Head of caudate nucleus (tissue), 42 donors: ENCODE measurements at regions of chr1 and their contacts with region 1.

Region 1: GRCh38 chr1:212608209-212608955 is at the start of gene ATF3:
- DNase-seq: peak; percentile 96 to 100 (median 99)

Region 2: DNA sequence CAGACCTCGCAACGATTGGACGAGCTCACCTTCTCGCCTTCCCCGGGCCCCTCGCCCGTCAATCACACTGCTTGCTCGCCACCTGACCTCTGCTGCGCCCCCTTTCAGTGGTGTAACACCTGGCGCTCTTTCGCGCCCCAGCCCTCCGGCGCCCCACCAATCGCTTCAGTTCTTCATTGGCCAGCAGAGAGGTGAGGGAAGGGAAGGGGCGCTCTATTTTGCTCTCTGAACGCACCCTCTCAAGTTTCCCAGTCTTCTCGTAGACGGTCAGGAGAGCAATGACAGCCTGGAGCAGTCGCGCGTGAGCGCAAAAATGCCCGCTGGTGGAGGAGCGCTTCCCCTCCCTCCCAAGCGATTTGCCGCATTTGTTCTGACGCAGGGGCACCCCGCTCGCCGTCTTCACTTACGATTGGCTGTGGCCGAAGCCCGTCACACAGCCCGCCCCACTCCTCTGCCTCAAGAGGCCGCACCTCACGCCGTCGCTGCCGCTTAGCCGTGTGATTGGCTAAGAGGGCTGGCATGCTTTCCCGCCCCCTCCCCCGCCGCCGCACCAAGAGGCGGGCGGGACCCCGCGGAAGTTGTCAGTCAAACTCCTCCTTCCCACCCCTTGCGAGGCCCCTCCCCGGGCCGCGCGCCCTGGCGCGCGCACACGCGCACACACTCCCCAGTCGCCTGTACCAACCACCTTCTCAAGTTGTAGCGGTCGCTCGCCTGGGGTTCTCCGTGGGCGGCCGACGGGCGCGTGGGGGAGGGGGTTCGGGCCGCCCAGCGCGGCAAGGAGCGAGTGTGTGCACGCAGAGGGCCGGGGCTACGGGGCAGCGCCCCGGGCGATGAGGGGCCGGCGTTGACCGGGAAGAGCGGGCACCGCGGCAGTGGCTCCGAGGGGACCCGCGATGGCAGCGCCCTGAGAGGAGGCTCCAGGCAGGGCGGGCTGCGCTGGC is 323.4 kb before region 1 on chr1 and contains the start of gene PPP2R5A:
- intact Hi-C with region 1: loop called (anchors 10 kb)
- DNase-seq: peak; percentile 97 to 100 (median 99)

Region 3: GRCh38 chr1:212469701-212470458 is 138.5 kb before region 1 on chr1:
- intact Hi-C with region 1: loop called (anchors 5 kb)
- DNase-seq: peak; percentile 61 to 97 (median 86)

Region 4: DNA sequence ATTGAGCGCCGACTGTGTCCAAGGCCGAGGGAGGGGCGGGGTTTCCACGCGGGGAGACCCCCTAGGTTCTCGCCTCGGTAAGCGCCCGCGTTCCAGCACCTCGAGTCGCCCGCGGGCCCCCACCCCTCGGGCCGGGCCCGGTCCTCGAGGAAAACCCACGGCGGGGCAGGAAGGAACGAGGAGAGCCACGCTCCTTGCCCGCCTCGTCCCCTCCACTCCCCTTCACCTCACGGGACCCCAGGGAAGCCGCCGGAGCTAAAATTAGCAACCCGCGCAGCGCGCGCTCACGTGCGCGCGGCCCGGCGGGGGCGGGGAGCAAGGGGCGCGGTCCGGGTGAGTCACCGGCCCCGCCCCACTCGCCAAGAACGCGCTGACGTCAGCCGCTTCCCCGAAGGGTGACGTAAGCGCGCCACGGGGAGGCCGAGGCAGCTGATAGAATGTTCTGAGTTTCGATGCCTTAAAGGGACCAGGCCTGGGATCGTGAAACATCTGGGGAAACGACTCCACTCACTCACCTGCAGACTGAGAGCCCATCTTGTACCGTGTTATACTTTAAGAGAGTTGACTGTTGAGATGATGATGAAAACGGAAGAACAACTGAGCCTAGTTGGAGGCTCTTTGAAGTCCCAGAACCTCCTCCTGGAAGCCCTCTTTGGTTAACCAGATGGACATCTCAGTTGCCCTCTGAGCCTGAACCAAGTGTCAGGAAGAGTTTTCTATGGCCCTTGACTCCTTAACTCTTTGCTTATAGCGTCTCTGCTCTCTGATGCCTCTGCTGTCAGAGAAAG is 49.5 kb before region 1 on chr1:
- intact Hi-C with region 1: loop called (anchors 1 kb)
- DNase-seq: peak; percentile 84 to 96 (median 92)

Region 5: DNA sequence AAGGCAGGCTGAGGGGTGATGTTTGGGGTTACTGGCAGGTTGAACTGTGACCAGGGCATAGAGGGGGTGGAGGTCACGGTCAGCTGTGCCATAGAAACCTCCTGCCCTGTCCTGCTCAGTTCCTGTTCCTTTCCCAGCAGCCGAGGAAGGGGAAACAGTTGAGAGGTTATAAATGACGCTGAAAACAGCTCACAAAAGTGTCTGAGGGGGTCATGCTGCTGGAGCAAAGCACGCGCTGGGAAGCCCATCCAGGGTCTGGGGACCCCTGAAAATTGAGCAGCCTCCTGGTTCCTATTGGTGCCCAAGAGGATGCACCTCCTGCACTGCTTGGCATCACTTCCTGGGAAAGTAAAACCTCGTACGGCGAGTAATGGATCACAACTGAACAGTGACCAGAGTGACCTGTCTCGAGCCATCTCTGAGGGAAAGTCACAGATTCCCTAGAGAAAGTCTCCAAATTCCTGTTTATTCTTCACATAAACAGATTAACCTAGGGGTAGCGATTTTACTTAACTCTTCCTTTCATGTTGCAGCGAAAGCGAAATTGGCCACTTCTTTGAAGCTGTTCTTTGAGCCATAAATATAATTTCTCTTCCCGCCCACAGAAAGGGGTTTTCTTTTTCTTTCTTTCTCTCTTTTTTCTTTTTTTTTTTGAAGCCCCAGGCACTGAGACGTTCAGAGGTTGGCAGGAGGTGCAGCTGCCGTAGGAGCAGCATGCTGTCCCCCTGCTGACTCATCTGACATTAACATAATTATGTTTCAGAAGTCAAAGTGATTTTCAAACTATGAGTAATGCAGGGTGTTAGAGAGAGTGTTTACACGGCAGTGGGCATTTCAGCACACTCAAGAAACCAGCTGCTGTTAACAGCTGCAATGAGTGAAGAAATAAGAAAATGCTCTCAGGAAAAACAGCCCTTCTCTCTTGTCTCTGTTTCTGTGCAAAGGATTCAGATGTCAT is 41.6 kb before region 1 on chr1:
- intact Hi-C with region 1: loop called (anchors 2 kb)
- DNase-seq: peak in 28 of 42 donors; percentile 17 to 80 (median 44)